BJ (cell line): ENCODE measurements at regions of chr7 and their contacts with region 1.

Region 1: DNA sequence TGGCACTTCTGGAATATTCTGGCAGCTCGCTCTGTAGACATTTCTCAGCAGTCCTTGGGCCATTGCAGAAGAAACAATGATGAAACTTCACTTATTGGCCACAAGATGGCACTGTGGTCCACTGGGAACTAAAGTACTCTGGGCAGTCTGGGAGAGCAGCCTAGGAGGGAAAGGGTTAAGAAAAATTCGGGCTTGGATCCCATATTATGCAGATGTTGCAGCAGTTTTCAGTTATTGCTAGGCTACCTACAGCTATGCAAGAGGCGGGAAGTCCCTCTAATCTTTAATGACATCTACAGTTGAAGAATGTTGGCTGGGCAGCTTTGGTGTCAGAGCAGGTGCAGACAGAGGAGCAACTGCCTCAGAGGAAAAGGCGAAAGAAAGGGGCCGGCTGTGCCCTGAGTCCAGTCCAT is 201.7 kb upstream of the PRSS58 start:
- DNase-seq: peak; percentile 41
- H3K4me3 ChIP-seq: no peak overlapping the region
- H3K27me3 ChIP-seq: no peaks in the 10 kb centered on the region
- CTCF ChIP-seq: peak; percentile 75

Region 2: DNA sequence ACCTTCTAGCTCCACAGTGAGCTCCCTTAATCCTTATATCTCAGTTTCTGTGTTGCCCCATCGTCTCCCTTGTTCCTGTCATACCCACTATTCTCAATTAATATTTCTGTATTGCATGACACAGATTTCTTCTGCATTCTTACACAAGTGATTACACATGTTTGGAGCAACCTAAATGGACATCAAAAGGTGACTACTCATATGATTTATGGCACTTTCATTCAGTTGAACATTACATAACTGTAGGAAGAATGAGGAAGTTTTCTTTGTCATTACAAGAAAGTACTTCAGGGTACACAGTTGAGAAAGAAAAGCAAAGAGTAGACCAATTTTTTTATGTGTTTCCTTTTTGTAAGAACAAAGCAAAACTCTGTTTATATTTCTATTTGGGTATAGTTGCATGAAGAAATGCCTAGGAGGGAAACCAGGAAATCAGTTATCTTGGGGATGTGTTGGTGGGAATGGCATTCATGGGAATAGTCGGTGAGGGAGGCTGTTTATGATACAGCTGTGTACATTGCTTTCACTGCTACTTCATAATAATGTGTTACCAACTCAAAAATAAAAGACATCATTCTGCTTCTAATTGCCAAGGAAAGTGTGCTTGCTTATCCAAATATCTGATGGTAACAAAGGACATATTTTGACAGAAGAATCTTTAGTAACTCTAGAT is 594.6 kb before region 1 on chr7:
- CTCF ChIA-PET with region 1: no interaction called
- POLR2A ChIA-PET with region 1: no interaction called
- DNase-seq: no peak
- H3K4me3 ChIP-seq: no peak overlapping the region
- H3K27me3 ChIP-seq: no peaks in the 10 kb centered on the region
- CTCF ChIP-seq: no peak

Region 3: DNA sequence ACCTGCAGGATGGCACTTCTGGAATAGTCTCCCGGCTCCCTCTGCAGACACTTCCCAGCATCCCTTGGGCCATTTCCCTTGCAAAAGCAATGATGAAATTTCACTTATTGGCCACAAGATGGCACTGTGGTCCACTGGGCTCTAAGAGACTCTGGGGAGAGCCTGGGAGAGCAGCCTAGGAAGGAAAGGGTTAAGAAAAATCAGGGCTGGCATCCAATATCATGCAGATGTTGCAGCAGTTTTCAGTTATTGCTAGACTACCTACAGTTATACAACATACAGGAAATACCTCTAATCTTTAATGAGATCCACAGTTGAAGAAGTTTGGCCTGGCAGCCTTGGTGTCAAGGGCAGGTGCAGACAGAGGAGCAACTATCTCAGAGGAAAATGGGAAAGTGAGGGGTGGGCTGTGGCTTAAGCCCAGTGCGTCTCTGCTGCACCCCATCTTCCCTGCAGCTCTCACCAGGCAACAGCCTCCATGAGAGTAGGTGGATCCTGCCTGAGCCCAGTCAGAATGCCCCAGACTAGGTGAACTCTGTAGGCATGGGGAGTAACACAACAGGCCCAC is 101.5 kb before region 1 on chr7:
- CTCF ChIA-PET with region 1: interaction called, 16 read pairs
- POLR2A ChIA-PET with region 1: no interaction called
- DNase-seq: no peak
- H3K4me3 ChIP-seq: no peak overlapping the region
- H3K27me3 ChIP-seq: no peaks in the 10 kb centered on the region
- CTCF ChIP-seq: peak; percentile 85

Region 4: GRCh38 chr7:142420559-142421362 is 38.8 kb before region 1 on chr7:
- CTCF ChIA-PET with region 1: interaction called, 12 read pairs
- POLR2A ChIA-PET with region 1: interaction called, 17 read pairs
- DNase-seq: no peak
- H3K4me3 ChIP-seq: no peak overlapping the region
- H3K27me3 ChIP-seq: peaks cover 4% of the 10 kb centered on the region; the same call in 1 of the 2 replicates
- CTCF ChIP-seq: peak; percentile 69

Region 5: DNA sequence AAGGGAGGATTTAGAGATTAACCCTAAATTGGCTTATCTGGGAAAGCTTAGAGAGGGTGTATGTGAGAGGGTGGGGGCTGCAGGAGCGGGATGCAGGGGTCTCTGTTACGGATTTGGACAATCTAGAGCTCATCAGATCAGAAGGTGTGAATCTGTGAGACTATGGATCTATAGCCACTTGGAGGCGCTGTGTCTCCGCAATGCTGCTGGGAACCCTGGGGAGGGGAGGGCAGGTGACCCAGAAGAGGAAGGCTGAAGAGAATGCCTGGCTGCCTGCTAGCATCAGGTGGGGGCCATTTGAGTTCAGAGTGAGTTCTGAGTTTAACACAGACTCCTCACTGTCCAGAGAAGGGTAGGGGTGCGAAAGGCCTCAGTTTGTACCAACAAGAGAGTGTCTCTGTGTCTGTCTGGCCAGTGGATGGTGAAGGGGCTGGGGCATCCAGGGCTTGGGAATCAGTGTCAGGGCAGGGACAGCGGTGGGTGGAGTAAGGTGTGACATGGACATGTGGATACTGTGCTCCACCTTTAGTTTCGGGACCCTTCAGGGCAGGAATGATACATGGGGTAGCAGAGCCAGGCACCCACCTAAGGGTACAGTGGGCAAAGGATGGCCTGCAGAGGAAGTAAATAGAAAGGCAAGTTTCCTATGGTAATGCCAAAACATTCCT is 14.4 kb before region 1 on chr7:
- CTCF ChIA-PET with region 1: interaction called, 90 read pairs
- POLR2A ChIA-PET with region 1: no interaction called
- DNase-seq: no peak
- H3K4me3 ChIP-seq: no peak overlapping the region
- H3K27me3 ChIP-seq: no peaks in the 10 kb centered on the region
- CTCF ChIP-seq: peak; percentile 34; the same call in 1 of the 2 replicates

Region 6: GRCh38 chr7:142496545-142497041 is 37.0 kb after region 1 on chr7:
- CTCF ChIA-PET with region 1: interaction called, 641 read pairs
- POLR2A ChIA-PET with region 1: no interaction called
- DNase-seq: no peak
- H3K4me3 ChIP-seq: no peak overlapping the region
- H3K27me3 ChIP-seq: peaks cover 16% of the 10 kb centered on the region
- CTCF ChIP-seq: peak; percentile 77

Region 7: DNA sequence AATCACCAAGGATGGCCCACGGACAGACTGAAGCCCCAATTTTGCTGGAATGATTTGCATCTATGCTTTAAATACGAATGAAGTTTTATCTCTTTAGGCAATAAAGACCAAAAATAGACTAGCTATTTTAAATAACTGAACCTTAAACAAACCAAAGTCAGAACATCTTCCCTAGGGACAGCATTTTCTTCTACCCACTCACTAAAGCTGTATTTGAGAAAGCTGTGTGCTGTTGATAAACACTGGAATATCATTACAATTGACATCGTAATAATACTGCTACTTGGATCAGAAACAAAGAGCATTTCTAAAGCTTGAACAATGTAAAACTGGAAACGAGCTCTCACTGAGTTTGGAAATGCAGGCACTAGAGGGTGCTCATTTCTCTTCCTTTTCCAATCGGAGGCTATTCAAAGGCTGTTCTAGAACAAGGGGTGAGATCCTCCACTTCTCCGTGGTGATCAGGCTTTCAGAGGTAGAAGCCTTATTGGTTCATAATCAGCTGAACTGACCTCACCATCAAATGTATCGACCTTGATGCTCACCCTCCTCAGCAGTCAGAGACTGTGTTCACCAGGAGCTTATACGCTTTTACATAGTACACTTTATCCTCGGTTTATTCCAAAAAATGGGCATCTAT is 64.4 kb after region 1 on chr7:
- CTCF ChIA-PET with region 1: interaction called, 28 read pairs
- POLR2A ChIA-PET with region 1: no interaction called
- DNase-seq: no peak
- H3K4me3 ChIP-seq: no peak overlapping the region
- H3K27me3 ChIP-seq: peaks cover 11% of the 10 kb centered on the region
- CTCF ChIP-seq: peak; percentile 28